Activated B cell treated with CpG ODN at 0.5 μM for 24 hours (primary cell): ENCODE measurements at regions of chr7 and their contacts with region 1.

Region 1: GRCh38 chr7:64887756-64888508 is 15.1 kb upstream of the ZNF273 start:
- DNase-seq: peak; percentile 33
- ATAC-seq: peak; percentile 72
- H3K4me3 Mint-ChIP-seq: peak overlapping the region; percentile 86
- H3K27ac Mint-ChIP-seq: no peak overlapping the region
- H3K4me1 Mint-ChIP-seq: peaks cover 13% of the 10 kb centered on the region
- H3K27me3 Mint-ChIP-seq: peaks cover 52% of the 10 kb centered on the region
- CTCF ChIP-seq: no peak

Region 2: GRCh38 chr7:64602518-64602917 is 285.4 kb before region 1 on chr7:
- CTCF ChIA-PET with region 1: no interaction called
- POLR2A ChIA-PET with region 1: no interaction called
- intact Hi-C with region 1: no loop called
- DNase-seq: no peak
- ATAC-seq: no peak
- H3K4me3 Mint-ChIP-seq: no peak overlapping the region
- H3K27ac Mint-ChIP-seq: no peak overlapping the region
- H3K4me1 Mint-ChIP-seq: no peaks in the 10 kb centered on the region
- H3K27me3 Mint-ChIP-seq: no peaks in the 10 kb centered on the region
- CTCF ChIP-seq: no peak

Region 3: DNA sequence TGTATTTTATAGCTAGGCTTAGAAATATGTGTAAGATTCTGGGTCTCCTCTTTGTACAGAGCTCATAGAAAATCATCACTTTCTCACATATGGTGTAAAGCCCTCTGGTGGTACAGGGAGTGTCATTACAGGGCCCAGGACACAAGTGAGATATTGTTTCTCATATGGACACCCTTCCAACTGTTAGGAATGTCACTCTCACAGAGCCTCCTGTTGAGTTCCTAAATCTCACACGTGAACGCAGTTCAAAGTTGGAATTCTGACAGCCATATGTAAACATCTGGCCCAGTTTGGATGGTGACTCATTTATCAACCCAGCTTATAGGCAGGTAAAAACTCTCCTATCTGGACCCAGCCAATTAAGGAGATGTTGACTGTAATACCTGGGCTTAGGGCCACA is 257.4 kb before region 1 on chr7:
- CTCF ChIA-PET with region 1: no interaction called
- POLR2A ChIA-PET with region 1: no interaction called
- intact Hi-C with region 1: loop called (anchors 10 kb)
- DNase-seq: no peak
- ATAC-seq: peak; percentile 52
- H3K4me3 Mint-ChIP-seq: no peak overlapping the region
- H3K27ac Mint-ChIP-seq: no peak overlapping the region
- H3K4me1 Mint-ChIP-seq: peaks cover 5% of the 10 kb centered on the region
- H3K27me3 Mint-ChIP-seq: no peaks in the 10 kb centered on the region
- CTCF ChIP-seq: no peak